ENCODE measurements at regions of chr13 and their contacts with region 1.

Region 1: GRCh38 chr13:39263033-39263432 is 224.8 kb downstream of the NHLRC3 start:
- DNase-seq: no peak
- ATAC-seq: peak; percentile 85
- H3K4me3 ChIP-seq: no peak overlapping the region
- H3K27ac ChIP-seq: no peak overlapping the region
- H3K4me1 ChIP-seq: peaks cover 3% of the 10 kb centered on the region
- H3K27me3 ChIP-seq: no peaks in the 10 kb centered on the region
- CTCF ChIP-seq: peak; percentile 70

Region 2: GRCh38 chr13:39144941-39145533 is 118.0 kb before region 1 on chr13:
- intact Hi-C with region 1: loop called (anchors 10 kb)
- DNase-seq: no peak
- ATAC-seq: peak; percentile 70
- H3K4me3 ChIP-seq: no peak overlapping the region
- H3K27ac ChIP-seq: no peak overlapping the region
- H3K4me1 ChIP-seq: peaks cover 3% of the 10 kb centered on the region
- H3K27me3 ChIP-seq: no peaks in the 10 kb centered on the region
- CTCF ChIP-seq: peak; percentile 74

Region 3: DNA sequence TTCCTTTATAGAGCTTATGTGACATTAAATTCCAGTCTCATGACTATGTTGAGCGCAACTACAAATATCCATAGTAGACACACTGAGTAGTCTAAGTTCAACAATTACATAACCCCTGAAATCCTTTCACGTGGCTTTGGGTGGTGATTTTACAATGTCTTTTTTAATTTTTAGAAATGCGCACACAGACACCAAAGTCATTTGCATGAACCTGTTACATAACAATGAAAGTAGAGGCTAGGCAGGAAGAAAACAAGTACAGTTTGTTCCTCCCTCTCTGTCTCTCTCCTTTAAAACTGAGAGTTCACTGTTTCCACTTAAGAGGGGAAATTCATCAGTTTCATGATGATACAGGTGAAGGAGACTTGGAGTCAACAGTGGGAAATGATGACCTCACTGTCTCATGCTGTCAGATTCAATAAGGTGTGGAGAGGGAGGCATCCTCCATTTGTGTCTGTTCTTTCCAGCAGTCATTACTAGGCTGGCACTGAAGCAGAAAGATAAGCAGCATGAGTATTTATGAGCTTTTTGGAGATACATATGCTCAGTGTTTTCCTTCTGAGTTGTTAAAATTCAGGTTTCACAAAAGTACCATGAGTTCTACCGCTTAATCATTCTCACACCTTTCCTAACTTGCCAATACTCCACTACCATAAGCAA is 138.1 kb after region 1 on chr13:
- intact Hi-C with region 1: no loop called
- DNase-seq: no peak
- ATAC-seq: no peak
- H3K4me3 ChIP-seq: no peak overlapping the region
- H3K27ac ChIP-seq: no peak overlapping the region
- H3K4me1 ChIP-seq: no peaks in the 10 kb centered on the region
- H3K27me3 ChIP-seq: no peaks in the 10 kb centered on the region
- CTCF ChIP-seq: no peak

Region 4: GRCh38 chr13:39474600-39474999 is 211.6 kb after region 1 on chr13:
- intact Hi-C with region 1: no loop called
- DNase-seq: no peak
- ATAC-seq: no peak
- H3K4me3 ChIP-seq: no peak overlapping the region
- H3K27ac ChIP-seq: no peak overlapping the region
- H3K4me1 ChIP-seq: no peaks in the 10 kb centered on the region
- H3K27me3 ChIP-seq: no peaks in the 10 kb centered on the region
- CTCF ChIP-seq: no peak

Region 5: GRCh38 chr13:39835253-39835652 is 572.2 kb after region 1 on chr13:
- intact Hi-C with region 1: no loop called
- DNase-seq: no peak
- ATAC-seq: no peak
- H3K4me3 ChIP-seq: no peak overlapping the region
- H3K27ac ChIP-seq: no peak overlapping the region
- H3K4me1 ChIP-seq: no peaks in the 10 kb centered on the region
- H3K27me3 ChIP-seq: no peaks in the 10 kb centered on the region
- CTCF ChIP-seq: no peak

Measured in upper lobe of right lung (tissue), 1 donor.